ENCODE measurements at regions of chr3 and their contacts with region 1.

Region 1: GRCh38 chr3:175535342-175535741 is 676.2 kb downstream of the NAALADL2 start:
- DNase-seq: no peak
- ATAC-seq: no peak
- H3K4me3 ChIP-seq: no peak overlapping the region
- H3K27ac ChIP-seq: no peak overlapping the region
- H3K4me1 ChIP-seq: no peaks in the 10 kb centered on the region
- H3K27me3 ChIP-seq: no peaks in the 10 kb centered on the region
- CTCF ChIP-seq: no peak
- EP300 ChIP-seq: no peak
- POLR2A ChIP-seq: no peak
- RAD21 ChIP-seq: no peak

Region 2: DNA sequence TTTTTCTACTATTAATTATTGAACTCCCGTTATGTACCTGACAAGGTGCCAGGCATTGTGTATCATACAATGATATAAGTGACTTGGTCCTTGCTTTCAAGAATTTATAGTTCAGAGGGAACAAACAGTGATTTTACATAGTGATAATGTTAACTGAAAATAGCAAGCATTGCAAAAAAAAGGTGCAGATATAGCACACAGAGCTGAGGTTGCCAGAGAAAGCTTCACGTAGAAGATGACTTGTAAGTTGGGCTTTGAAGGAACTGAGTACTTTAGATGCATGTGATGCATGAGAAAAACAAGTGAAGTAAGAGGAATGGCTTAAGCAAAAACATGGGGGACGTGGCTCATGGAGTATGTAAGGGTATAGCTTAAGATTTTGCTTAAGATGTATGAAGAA is 91.7 kb before region 1 on chr3:
- CTCF ChIA-PET with region 1: no interaction called
- POLR2A ChIA-PET with region 1: no interaction called
- in situ Hi-C with region 1: no loop called
- intact Hi-C with region 1: no loop called
- DNase-seq: no peak
- ATAC-seq: no peak
- H3K4me3 ChIP-seq: no peak overlapping the region
- H3K27ac ChIP-seq: no peak overlapping the region
- H3K4me1 ChIP-seq: no peaks in the 10 kb centered on the region
- H3K27me3 ChIP-seq: no peaks in the 10 kb centered on the region
- CTCF ChIP-seq: no peak
- EP300 ChIP-seq: no peak
- POLR2A ChIP-seq: no peak
- RAD21 ChIP-seq: no peak

Region 3: DNA sequence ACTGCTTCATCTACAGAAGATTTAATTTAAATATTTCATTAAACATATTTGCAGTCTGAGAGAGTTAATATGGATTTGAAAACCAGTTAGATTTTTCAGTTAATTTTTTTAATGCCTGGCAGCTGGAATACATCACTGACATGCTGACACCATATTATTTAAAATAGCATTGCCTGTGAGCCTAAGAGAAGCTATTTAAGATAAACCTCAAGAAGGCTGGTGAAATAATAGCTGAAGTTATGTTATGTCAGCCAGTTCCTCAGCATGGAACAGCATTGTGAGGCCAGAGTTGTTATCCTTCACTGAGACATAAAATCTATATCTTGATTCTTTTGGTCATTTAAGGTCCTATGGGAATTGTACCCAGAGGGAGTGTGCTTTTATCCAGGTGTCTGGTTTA is 29.0 kb after region 1 on chr3:
- CTCF ChIA-PET with region 1: no interaction called
- POLR2A ChIA-PET with region 1: no interaction called
- in situ Hi-C with region 1: no loop called
- intact Hi-C with region 1: no loop called
- DNase-seq: no peak
- ATAC-seq: no peak
- H3K4me3 ChIP-seq: no peak overlapping the region
- H3K27ac ChIP-seq: no peak overlapping the region
- H3K4me1 ChIP-seq: no peaks in the 10 kb centered on the region
- H3K27me3 ChIP-seq: no peaks in the 10 kb centered on the region
- CTCF ChIP-seq: no peak
- EP300 ChIP-seq: no peak
- POLR2A ChIP-seq: no peak
- RAD21 ChIP-seq: no peak

Region 4: GRCh38 chr3:175590745-175591144 is 55.4 kb after region 1 on chr3:
- CTCF ChIA-PET with region 1: no interaction called
- POLR2A ChIA-PET with region 1: no interaction called
- in situ Hi-C with region 1: no loop called
- intact Hi-C with region 1: loop called (anchors 2 kb)
- DNase-seq: no peak
- ATAC-seq: no peak
- H3K4me3 ChIP-seq: no peak overlapping the region
- H3K27ac ChIP-seq: no peak overlapping the region
- H3K4me1 ChIP-seq: no peaks in the 10 kb centered on the region
- H3K27me3 ChIP-seq: no peaks in the 10 kb centered on the region
- CTCF ChIP-seq: no peak
- EP300 ChIP-seq: no peak
- POLR2A ChIP-seq: no peak
- RAD21 ChIP-seq: no peak